ENCODE measurements at regions of chr1 and their contacts with region 1.

Region 1: GRCh38 chr1:75203415-75204277 is 69.5 kb downstream of the LHX8 start:
- DNase-seq: peak; percentile 9
- H3K4me3 ChIP-seq: no peak overlapping the region
- H3K27me3 ChIP-seq: no peaks in the 10 kb centered on the region
- CTCF ChIP-seq: peak; percentile 75

Region 2: GRCh38 chr1:74771913-74772515 is 431.6 kb before region 1 on chr1:
- CTCF ChIA-PET with region 1: interaction called, 17 read pairs
- POLR2A ChIA-PET with region 1: no interaction called
- DNase-seq: peak; percentile 5
- H3K4me3 ChIP-seq: no peak overlapping the region
- H3K27me3 ChIP-seq: no peaks in the 10 kb centered on the region
- CTCF ChIP-seq: peak; percentile 72

Region 3: GRCh38 chr1:75134647-75135572 is 68.7 kb before region 1 on chr1:
- CTCF ChIA-PET with region 1: no interaction called
- POLR2A ChIA-PET with region 1: no interaction called
- DNase-seq: no peak
- H3K4me3 ChIP-seq: no peak overlapping the region
- H3K27me3 ChIP-seq: peaks cover 48% of the 10 kb centered on the region
- CTCF ChIP-seq: no peak